CD8-positive, alpha-beta memory T cell (primary cell): ENCODE measurements at regions of chrX and their contacts with region 1.

Region 1: DNA sequence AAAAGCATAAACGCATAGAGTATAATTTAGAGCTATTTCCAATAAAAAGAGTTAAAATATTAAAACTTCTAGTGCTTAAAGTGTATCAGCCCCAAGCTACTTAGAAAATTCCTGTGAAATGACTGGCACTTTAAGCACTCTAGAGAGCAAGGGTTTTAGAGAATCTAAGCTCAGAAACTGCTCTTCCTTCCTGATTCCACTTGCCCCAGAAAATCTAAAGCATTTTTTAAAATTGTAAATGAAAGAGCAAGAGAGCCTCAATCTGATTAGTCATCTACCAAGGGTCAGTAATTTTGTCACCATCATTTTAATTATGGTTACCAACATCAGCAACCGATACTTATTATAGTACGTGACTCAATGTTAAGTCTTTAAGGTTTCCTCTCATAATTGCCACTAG is 25.0 kb downstream of the CTPS2 start:
- DNase-seq: no peak
- H3K4me3 ChIP-seq: no peak overlapping the region
- H3K4me3 Mint-ChIP-seq: no peak overlapping the region
- H3K27ac ChIP-seq: no peak overlapping the region
- H3K27ac Mint-ChIP-seq: no peak overlapping the region
- H3K4me1 ChIP-seq: no peaks in the 10 kb centered on the region
- H3K4me1 Mint-ChIP-seq: no peaks in the 10 kb centered on the region
- H3K27me3 ChIP-seq: no peaks in the 10 kb centered on the region
- H3K27me3 Mint-ChIP-seq: peaks cover 0 to 3% of the 10 kb centered on the region in 2 donors

Region 2: GRCh38 chrX:15653961-15654360 is 1033.6 kb before region 1 on chrX:
- CTCF ChIA-PET with region 1: no interaction called
- POLR2A ChIA-PET with region 1: interaction called, 12 read pairs
- DNase-seq: no peak
- H3K4me3 ChIP-seq: no peak overlapping the region
- H3K4me3 Mint-ChIP-seq: no peak overlapping the region
- H3K27ac ChIP-seq: no peak overlapping the region
- H3K27ac Mint-ChIP-seq: no peak overlapping the region
- H3K4me1 ChIP-seq: no peaks in the 10 kb centered on the region
- H3K4me1 Mint-ChIP-seq: peaks cover 0 to 6% (median 0%) of the 10 kb centered on the region in 3 donors
- H3K27me3 ChIP-seq: no peaks in the 10 kb centered on the region
- H3K27me3 Mint-ChIP-seq: peaks cover 4 to 16% of the 10 kb centered on the region in 2 donors

Region 3: DNA sequence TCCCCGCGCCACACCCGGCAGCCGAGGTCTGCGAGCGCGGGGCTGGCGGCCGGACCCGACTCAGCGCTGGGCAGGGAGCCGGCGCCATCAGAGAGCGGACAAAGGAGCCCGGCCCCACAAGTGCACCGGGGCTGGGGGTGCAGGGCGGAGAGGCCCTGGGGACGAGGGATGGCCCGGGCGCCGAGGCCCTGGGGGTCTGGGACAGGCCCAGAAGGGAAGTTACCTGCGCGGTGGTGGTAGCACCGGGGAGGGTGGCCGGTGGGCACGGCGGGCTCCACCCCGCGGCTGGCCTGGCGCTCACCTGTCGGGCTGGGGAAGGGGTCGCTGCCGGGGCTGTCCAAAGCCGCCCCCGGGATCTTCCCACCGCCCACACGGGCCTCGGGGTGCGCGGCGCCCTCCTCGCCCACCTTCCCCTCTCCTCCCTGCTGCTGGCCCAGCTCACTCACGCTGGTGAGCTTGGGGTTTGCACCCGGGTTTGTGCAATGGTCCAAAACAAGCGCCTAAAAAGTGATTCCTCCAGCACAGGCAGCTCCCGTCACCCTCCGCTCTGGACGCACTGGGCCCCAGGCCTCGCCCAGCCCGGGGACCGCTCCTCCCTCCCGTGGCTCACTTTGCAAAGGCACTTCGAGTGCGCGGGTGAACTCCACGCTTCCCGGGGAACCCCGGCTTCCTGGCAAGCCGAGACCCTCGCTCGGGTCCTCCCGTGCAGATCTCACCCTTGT is 24.8 kb after region 1 on chrX and contains the start of gene CTPS2:
- CTCF ChIA-PET with region 1: no interaction called
- POLR2A ChIA-PET with region 1: no interaction called
- DNase-seq: peak; percentile 13 to 59 (median 39)
- H3K4me3 ChIP-seq: peak within 1 kb of the TSS; percentile 64
- H3K4me3 Mint-ChIP-seq: peak within 1 kb of the TSS; percentile 83 to 95 (median 89)
- H3K27ac ChIP-seq: peak within 1 kb of the TSS; percentile 57
- H3K27ac Mint-ChIP-seq: peak within 1 kb of the TSS; percentile 61 to 94 (median 88)
- H3K4me1 ChIP-seq: no peaks in the 10 kb centered on the region
- H3K4me1 Mint-ChIP-seq: peaks cover 9 to 25% (median 22%) of the 10 kb centered on the region in 3 donors
- H3K27me3 ChIP-seq: no peaks in the 10 kb centered on the region
- H3K27me3 Mint-ChIP-seq: peaks cover 0 to 18% of the 10 kb centered on the region in 2 donors
- total RNA-seq, gene CTPS2: 5.2 to 5.7 TPM